Heart right ventricle (tissue), 16 donors: ENCODE measurements at regions of chr10 and their contacts with region 1.

Region 1: DNA sequence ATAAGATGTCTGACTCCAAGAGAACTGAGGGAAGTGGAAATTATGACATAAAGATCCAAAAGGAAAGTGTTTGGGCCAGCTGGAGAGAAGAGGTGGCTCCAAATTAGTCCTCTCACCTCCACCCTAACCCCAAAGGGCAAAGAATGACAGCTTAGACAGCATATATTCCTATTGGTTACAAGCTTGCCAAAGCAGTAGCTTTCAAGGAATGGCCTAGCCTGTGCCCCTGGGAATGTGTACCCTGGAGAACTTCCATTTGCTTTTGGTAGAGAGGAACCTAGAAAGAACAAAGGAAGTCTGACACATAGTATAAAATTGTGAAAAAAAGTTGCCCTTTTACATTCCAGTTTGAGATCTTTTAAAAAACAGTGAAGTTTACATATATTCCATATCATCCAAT is 11.2 kb upstream of the NRG3 start:
- DNase-seq: no peak
- ATAC-seq: no peak
- H3K4me3 ChIP-seq: no peak overlapping the region
- H3K27ac ChIP-seq: no peak overlapping the region
- H3K4me1 ChIP-seq: peaks cover 0 to 17% (median 0%) of the 10 kb centered on the region in 9 donors
- H3K27me3 ChIP-seq: peaks cover 0 to 3% (median 0%) of the 10 kb centered on the region in 7 donors
- CTCF ChIP-seq: no peak

Region 2: GRCh38 chr10:81814691-81815241 is 49.0 kb before region 1 on chr10:
- intact Hi-C with region 1: loop called in 1 of 10 experiments (anchors 1 kb)
- DNase-seq: no peak
- ATAC-seq: no peak
- H3K4me3 ChIP-seq: no peak overlapping the region
- H3K27ac ChIP-seq: no peak overlapping the region
- H3K4me1 ChIP-seq: no peaks in the 10 kb centered on the region
- H3K27me3 ChIP-seq: no peaks in the 10 kb centered on the region
- CTCF ChIP-seq: no peak